ENCODE measurements at regions of chr7 and their contacts with region 1.

Region 1: DNA sequence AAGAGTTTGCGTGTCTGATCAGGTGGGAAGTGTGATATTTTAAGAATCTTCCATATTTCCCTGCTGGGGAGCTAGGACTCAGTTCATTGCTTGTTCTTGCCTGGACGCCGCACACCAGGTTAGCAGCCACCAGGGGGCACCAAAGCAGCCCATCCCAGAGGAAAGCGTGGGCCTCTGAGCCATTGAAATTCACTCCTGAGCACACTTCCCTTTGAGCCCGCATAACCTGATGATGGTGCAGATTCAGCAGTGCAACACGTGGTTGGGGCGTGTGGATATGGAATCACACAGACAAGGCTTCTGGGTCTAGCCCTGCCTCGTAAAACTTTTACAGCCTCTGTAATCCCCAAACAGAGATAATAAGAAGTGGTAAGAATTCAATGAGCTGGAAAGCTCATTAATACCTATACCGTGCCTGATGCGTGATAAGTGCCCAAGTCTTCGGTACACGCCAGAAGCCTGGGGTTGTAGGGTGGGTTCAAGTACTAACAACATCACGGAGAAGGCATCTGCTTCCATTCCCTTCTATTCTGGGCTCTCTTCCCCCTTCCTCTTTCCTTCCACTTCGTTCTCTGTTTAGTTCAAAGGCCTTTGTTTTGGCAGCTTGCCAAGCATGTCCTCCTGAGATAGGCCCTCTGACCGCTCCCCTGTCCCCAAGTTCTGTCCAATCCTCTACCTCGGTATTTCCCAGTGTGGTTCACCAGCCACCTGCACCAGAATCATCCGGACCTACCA is 130.1 kb upstream of the KMT2E start:
- DNase-seq: peak; percentile 86
- H3K4me3 Mint-ChIP-seq: no peak overlapping the region
- H3K27ac Mint-ChIP-seq: no peak overlapping the region
- H3K4me1 Mint-ChIP-seq: peaks cover 10% of the 10 kb centered on the region
- H3K27me3 Mint-ChIP-seq: no peaks in the 10 kb centered on the region

Region 2: DNA sequence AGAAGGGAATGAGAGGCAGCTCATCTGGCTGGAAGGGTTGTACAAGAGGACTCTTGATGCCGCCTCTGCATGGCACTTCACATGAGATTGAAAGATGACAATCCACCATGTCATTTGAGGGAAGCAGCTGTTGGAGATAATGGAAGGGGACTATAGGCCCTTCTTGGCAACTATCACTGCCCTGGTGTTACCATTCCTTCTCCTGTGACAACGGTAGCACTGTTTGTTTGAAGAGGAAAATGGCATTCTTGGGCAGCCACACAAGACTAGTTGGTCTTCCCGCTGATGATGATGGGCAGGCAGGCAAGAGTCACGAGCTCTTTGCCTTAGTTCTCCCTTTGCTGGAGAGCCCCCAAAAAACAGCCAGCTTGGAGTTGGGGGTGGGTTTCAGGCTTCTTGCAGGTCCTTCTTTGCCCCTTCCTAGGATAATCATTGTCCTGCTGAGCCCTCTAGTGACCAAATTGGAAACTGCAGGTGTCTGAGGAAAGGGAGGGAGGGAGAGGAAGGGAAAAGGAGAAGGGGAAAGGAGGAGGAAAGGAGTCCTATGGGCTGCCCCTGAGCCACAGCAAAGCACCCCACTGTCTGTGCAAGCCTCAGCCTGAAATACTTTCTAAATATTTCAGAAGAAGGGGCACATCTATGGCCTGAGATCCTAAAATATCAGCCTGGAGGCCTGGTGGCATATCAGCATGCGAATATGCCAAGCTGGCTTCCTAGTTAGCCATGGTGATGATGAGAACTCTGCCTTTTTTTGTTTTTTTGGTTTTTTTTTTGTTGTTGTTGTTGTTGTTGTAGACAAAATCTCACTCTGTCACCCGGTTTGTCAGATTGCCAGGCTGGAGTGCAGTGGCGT is 35.5 kb before region 1 on chr7:
- CTCF ChIA-PET with region 1: interaction called, 10 read pairs
- POLR2A ChIA-PET with region 1: no interaction called
- intact Hi-C with region 1: no loop called
- DNase-seq: peak; percentile 55
- H3K4me3 Mint-ChIP-seq: no peak overlapping the region
- H3K27ac Mint-ChIP-seq: no peak overlapping the region
- H3K4me1 Mint-ChIP-seq: no peaks in the 10 kb centered on the region
- H3K27me3 Mint-ChIP-seq: peaks cover 8% of the 10 kb centered on the region

Region 3: GRCh38 chr7:104895522-104896236 is 11.8 kb after region 1 on chr7:
- CTCF ChIA-PET with region 1: interaction called, 35 read pairs
- POLR2A ChIA-PET with region 1: interaction called, 4 read pairs
- intact Hi-C with region 1: no loop called
- DNase-seq: no peak
- H3K4me3 Mint-ChIP-seq: no peak overlapping the region
- H3K27ac Mint-ChIP-seq: no peak overlapping the region
- H3K4me1 Mint-ChIP-seq: peaks cover 4% of the 10 kb centered on the region
- H3K27me3 Mint-ChIP-seq: peaks cover 2% of the 10 kb centered on the region

Region 4: GRCh38 chr7:104908636-104909035 is 24.8 kb after region 1 on chr7:
- CTCF ChIA-PET with region 1: interaction called, 25 read pairs
- POLR2A ChIA-PET with region 1: no interaction called
- intact Hi-C with region 1: no loop called
- DNase-seq: no peak
- H3K4me3 Mint-ChIP-seq: no peak overlapping the region
- H3K27ac Mint-ChIP-seq: no peak overlapping the region
- H3K4me1 Mint-ChIP-seq: no peaks in the 10 kb centered on the region
- H3K27me3 Mint-ChIP-seq: peaks cover 11% of the 10 kb centered on the region

Region 5: DNA sequence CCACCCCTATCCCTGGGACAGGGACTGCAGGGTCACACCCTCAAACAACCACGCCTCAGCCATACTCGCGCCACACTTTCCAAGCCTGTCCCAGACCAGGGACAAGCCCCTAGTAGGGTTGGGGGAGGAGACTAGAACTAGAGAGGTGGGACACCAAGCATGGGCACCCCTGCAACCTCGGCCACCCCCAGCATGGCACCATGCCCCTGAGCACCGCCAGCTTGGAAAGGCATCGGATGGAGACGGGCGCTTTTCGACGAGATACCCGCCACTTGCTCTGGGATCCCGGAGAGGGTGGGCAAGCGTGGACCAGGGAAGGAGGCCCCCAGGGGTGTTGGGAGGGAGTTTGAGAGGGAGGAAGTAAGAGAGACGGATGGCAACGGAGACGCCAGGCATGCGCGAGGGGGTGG is 117.0 kb after region 1 on chr7:
- CTCF ChIA-PET with region 1: no interaction called
- POLR2A ChIA-PET with region 1: no interaction called
- intact Hi-C with region 1: no loop called
- DNase-seq: no peak
- H3K4me3 Mint-ChIP-seq: no peak overlapping the region
- H3K27ac Mint-ChIP-seq: no peak overlapping the region
- H3K4me1 Mint-ChIP-seq: peaks cover 84% of the 10 kb centered on the region
- H3K27me3 Mint-ChIP-seq: no peaks in the 10 kb centered on the region

Measured in activated CD4-positive, alpha-beta memory T cell treated with anti-CD3 and anti-CD28 coated beads for 36 hours (primary cell).